Heart left ventricle (tissue), 16 donors: ENCODE measurements at regions of chr1 and their contacts with region 1.

Region 1: GRCh38 chr1:109075531-109076490 is at the start of gene TAF13:
- DNase-seq: peak; percentile 97 to 98 (median 97)
- ATAC-seq: peak; percentile 99 to 100 (median 100)
- H3K4me3 ChIP-seq: peak within 1 kb of the TSS; percentile 40 to 84 (median 70)
- H3K27ac ChIP-seq: peak within 1 kb of the TSS; percentile 82 to 97 (median 92)
- H3K4me1 ChIP-seq: peaks cover 3 to 27% (median 20%) of the 10 kb centered on the region in 12 donors
- H3K27me3 ChIP-seq: no peaks in the 10 kb centered on the region
- CTCF ChIP-seq: peak in 6 of 12 donors; percentile 14 to 43 (median 35)
- POLR2A ChIP-seq: peak; percentile 77 to 83
- total RNA-seq, gene TAF13: 34.8 to 72.1 (median 55.4) TPM

Region 2: DNA sequence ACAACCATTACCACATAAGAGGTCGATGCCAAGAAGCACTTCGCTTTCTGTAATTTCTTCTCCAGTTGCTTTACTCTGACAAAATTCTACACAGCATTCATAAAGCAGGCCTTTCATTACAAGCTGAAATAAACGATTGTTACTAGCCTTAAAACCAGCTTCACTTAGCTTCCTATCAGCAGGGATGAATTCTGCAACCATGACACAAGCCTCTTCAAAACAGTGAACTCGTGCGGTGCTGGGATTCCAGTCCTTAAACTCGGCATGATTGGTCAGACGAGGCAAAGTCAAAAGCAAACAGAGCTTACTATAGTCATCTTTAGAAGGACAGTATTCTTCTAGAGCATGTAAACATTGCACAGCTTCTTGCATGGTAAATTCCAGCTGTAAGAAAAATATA is 64.5 kb before region 1 on chr1:
- intact Hi-C with region 1: no loop called
- DNase-seq: no peak
- ATAC-seq: no peak
- H3K4me3 ChIP-seq: no peak overlapping the region
- H3K27ac ChIP-seq: no peak overlapping the region
- H3K4me1 ChIP-seq: no peaks in the 10 kb centered on the region
- H3K27me3 ChIP-seq: no peaks in the 10 kb centered on the region
- CTCF ChIP-seq: no peak
- POLR2A ChIP-seq: no peak

Region 3: DNA sequence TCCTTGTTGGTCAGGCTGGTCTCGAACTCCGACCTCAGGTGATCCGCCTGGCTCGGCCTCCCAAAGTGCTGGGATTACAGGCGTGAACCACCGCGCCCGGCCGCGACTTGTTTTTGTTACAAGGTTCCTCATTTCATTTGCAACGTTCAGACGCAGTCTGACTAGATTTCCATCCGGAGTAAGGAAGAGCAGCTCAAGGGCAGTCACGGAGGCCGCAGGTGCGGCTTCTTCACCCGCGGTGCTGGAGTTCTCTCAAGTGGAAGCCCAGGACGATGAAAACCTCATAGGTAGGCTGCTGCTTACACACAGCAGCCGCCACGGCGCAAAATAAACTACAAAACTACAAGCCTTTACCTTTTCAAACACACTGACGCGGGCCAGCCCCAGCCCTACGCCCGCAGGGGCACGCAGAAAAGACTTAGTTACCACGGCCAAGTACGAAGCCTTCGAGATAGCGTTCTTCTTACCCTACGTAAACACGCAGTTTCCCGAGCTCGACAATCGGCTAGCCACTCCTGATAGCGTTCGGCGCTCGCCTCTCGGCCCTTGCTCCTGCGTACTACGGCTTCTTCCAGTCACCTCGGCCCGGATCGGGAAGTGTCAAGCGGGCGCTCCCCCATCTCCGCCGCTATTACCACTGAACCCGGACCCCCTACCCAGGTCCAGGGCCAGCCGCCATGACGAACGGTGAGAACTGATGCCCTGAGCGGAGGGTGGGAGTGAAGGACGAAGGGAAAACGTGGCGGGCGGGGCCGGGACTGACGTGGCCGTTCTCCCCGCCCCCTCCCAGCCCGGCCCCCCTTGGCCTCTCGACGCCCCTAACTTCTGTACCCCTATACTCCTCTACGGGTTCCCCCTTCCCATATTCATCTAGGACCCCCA is 14.6 kb after region 1 on chr1 and contains the start of gene TMEM167B:
- intact Hi-C with region 1: loop called in 1 of 10 experiments (anchors 1 kb)
- DNase-seq: peak; percentile 92 to 96 (median 94)
- ATAC-seq: peak; percentile 90 to 97 (median 94)
- H3K4me3 ChIP-seq: peak within 1 kb of the TSS; percentile 56 to 95 (median 88)
- H3K27ac ChIP-seq: peak within 1 kb of the TSS; percentile 93 to 99 (median 98)
- H3K4me1 ChIP-seq: peaks cover 0 to 51% (median 24%) of the 10 kb centered on the region in 12 donors
- H3K27me3 ChIP-seq: no peaks in the 10 kb centered on the region
- CTCF ChIP-seq: no peak
- POLR2A ChIP-seq: peak in 1 of 2 donors; percentile 77
- total RNA-seq, gene TMEM167B: 14.1 to 52.9 (median 29.9) TPM

Region 4: DNA sequence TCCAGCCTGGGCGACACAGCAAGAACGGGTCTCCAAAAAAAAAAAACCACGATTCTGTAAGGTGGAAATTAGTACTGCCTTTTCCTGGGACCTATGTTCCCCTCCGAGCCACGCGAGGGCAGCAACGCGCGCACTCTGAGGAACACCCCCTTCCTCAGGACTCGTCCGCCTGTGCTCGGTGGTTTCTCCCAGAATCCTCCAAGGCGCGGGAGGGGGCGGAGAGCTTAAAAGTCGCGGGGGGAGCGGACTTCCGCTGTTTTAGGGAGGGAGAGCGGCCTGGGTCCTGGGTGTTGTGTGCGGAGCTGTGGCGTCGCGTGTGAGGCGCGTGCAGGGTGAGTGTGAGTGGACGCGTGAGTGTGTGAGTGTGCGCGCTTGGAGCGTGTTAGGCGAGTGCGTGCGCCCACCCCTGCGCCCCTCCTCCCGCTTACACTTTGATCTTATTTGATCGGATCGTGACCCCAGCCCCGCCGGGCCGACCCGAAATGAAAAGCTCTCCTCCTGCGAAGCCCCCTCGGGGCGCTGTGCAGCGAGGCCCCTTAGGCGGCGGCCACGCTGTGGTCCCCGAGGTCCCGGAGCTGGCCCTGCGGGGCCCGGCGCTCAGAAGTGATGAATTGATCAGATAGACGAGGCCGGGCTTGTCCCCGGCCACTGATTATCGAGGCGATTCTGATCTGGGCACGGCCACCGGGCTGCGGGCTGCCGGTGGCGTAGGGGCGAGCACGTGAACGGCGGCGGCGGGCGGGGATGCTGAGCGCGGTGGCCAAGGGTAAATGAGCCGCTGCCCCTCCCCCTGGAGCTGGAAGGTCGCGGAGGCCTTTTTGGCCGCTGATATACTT is 24.3 kb after region 1 on chr1:
- intact Hi-C with region 1: loop called in 2 of 10 experiments (anchors 1 kb)
- DNase-seq: peak; percentile 97 to 98 (median 98)
- ATAC-seq: peak; percentile 97 to 99 (median 97)
- H3K4me3 ChIP-seq: peak overlapping the region; percentile 70 to 100 (median 94)
- H3K27ac ChIP-seq: peak overlapping the region; percentile 92 to 100 (median 98)
- H3K4me1 ChIP-seq: peaks cover 0 to 32% (median 20%) of the 10 kb centered on the region in 12 donors
- H3K27me3 ChIP-seq: no peaks in the 10 kb centered on the region
- CTCF ChIP-seq: peak; percentile 73 to 98 (median 87)
- POLR2A ChIP-seq: peak; percentile 67 to 95